ENCODE measurements at regions of chr20 and their contacts with region 1.

Region 1: DNA sequence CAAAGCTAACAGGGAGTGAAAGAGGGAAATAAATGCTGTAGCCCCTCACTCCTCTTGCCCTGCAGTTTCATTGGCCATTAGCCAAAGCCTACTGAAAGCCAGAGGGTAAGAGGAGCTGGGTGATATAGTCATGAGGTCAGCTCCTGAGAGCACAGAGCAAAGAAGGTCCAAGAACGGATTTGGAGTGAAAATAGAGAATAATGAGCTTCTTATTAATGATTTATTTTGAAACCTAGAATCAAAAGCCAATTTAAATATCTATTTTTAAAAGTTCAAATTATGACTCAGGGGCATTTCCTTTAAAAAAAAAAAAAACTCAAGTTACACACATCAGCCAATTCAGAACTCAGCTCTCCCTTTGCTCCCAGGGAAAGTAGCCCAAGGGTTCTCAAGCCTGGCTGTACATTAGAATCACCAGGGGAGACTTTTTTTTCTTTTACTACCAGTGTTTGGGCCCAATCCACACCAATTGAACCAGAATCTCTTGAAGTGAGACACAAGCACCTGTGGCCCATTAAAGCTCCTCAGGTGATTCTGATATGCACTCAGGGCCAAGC is 79.1 kb downstream of the SNAP25 start:
- DNase-seq: no peak
- ATAC-seq: no peak

Region 2: DNA sequence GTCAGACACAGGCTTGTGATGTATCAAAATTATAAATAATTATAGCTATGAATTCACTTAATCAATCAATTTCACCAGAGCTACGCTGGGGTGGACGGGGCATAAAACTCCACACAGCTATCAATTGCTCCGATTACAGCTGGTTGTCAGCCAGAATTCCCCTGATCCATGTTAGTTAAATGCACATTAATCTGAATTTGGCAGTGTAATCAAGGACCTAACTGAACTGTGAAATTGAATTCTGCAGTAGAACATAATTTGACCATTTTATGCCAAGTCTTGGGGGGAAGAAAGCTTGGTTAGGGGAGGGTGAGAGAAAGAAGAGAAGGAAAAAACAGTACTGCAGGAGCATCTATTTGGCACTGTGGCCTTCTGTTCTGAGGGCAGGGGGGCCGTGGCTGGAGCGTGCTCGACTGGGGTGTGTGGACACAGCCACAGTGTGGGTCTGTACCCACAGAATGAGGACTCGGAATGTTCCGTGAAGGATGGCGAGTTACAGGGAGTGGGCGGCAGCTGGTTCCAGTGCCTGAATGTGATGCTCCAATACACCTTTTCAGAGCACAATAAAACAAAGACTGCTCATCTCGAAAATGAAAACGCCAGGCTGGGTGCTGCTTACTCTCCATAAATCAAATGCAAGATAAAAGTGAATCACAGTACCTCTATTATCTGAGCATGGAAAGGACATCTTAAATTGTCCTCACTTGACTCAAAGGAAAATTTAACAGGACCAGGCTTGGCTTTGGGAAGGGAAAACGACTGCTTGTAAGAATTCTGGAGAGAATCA is 724.2 kb before region 1 on chr20:
- intact Hi-C with region 1: loop called (anchors 5 kb)
- DNase-seq: no peak
- ATAC-seq: no peak

Region 3: DNA sequence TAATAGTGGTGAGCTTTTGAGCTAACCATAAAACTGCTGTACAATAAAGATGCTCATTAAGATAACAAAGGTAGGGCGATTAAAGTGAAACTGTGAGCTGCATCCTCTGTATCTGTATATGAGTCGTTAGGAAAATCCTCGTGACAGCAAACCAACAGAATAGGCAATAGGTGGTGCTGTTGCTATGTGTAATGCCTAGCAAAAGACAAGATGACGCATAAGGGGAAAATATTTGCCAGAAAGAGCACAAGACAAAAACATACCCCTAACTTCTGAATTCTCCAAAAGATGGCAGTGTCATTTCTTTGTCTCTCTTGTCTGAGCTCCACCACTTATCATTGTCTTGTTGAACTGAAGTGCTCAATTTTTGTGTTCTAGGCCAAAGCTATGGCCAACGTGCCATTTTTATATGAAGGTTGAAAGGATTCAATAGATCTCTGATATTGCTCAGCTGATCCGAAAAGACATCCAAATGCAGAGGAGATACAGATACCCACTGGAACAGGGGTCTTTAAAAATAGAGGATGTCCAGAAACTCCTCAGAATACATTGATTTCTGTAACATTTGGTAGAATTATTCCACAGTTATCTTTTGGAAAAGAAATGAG is 319.3 kb before region 1 on chr20:
- intact Hi-C with region 1: no loop called
- DNase-seq: no peak
- ATAC-seq: peak; percentile 97

Region 4: DNA sequence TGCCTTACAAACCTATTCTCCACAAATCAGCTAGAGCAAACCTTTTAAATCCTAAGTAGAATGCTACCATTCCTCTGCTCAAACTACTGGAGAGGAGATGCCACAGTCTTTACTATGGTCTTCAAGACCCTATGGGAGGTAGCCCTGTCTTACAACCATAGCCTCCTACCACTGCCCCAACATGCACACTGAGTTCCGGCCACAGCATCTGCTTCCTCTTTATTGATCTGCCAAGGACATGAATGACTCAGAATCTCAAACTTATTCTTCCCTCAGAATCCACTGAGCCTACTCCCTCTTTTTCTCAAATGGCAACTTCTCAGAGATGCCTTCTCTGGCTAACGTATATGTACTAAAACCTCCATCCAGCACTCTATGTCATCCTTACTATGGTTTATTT is 275.1 kb before region 1 on chr20:
- intact Hi-C with region 1: no loop called
- DNase-seq: no peak
- ATAC-seq: no peak

Region 5: GRCh38 chr20:10225439-10226060 is 72.2 kb before region 1 on chr20:
- intact Hi-C with region 1: no loop called
- DNase-seq: no peak
- ATAC-seq: no peak

Measured in sciatic nerve (tissue), 2 donors.